AG04450 (cell line): ENCODE measurements at regions of chr6 and their contacts with region 1.

Region 1: DNA sequence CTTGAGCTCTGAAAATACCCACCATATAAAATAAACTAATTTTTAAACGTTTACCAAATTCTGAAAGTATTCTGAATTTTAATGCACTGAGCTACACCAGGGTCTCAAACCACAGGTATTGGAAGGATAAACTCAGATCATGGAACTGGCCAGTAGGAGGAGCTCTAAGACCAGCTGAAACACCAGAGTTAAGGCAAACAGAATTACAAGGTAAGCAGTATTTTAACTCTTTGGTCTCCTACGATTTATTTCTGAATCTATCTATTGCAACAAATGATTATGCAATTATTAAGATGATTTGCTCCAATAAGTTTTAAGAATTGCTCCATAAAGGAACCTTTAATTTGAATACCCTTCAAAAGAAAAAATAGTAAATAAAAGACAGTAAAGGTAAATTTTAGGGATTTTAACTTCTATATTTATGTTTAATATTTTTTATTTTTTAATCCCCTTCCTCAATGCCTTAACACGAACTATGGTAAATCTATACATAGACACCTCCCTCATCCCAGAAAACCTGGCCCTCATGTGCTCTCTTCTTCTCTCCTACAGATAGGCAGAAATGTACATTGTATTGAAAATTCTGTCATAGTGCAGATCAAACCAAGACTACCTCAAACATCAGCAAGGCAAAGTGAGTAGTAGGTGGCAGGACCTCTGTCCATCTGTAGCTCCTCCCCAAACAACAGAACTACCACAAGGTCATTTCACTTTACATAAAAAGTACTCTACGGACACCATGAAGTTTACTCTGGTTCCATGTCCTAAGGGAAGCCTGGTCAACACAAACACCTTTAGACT is 58.4 kb downstream of the SMLR1 start:
- DNase-seq: peak; percentile 62
- H3K4me3 ChIP-seq: no peak overlapping the region
- H3K27ac ChIP-seq: no peak overlapping the region
- H3K27me3 ChIP-seq: no peaks in the 10 kb centered on the region
- CTCF ChIP-seq: peak; percentile 88

Region 2: GRCh38 chr6:130872250-130873095 is 13.1 kb before region 1 on chr6:
- CTCF ChIA-PET with region 1: interaction called, 17 read pairs
- POLR2A ChIA-PET with region 1: no interaction called
- DNase-seq: no peak
- H3K4me3 ChIP-seq: no peak overlapping the region
- H3K27ac ChIP-seq: no peak overlapping the region
- H3K27me3 ChIP-seq: no peaks in the 10 kb centered on the region
- CTCF ChIP-seq: peak; percentile 95

Region 3: GRCh38 chr6:130906736-130907381 is 21.3 kb after region 1 on chr6:
- CTCF ChIA-PET with region 1: interaction called, 5 read pairs
- POLR2A ChIA-PET with region 1: interaction called, 14 read pairs
- DNase-seq: peak; percentile 18
- H3K4me3 ChIP-seq: no peak overlapping the region
- H3K27ac ChIP-seq: peak overlapping the region; percentile 47
- H3K27me3 ChIP-seq: no peaks in the 10 kb centered on the region
- CTCF ChIP-seq: no peak

Region 4: DNA sequence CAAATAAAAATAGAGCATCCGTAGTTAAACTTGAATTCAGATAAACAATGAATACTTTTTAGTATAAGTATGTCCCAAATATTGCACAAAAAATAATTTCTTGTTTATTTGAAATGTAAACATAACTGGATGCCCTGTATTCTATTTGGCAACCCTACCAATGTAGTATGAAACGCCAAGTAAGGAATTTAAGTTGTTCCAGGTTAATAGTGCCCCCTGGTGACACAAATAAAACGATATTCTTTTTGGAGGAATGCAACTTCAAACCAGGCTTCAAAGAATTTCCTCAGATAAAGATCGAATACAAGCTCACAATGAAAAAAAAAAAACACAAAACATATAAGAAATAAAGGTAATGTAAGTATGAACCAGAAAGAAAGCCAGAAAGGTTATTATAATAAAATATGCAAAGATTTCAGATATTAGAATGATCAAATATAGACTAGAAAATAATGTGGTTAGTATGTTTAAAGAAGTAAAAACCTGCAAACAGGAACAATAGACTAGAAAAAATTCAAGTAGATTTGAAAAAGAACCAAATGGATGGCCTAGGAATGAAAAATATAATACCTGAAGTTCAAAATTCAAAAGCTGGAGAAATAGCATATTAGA is 231.3 kb after region 1 on chr6:
- CTCF ChIA-PET with region 1: interaction called, 81 read pairs
- POLR2A ChIA-PET with region 1: interaction called, 10 read pairs
- DNase-seq: peak; percentile 11
- H3K4me3 ChIP-seq: no peak overlapping the region
- H3K27ac ChIP-seq: no peak overlapping the region
- H3K27me3 ChIP-seq: no peaks in the 10 kb centered on the region
- CTCF ChIP-seq: peak; percentile 48

Region 5: DNA sequence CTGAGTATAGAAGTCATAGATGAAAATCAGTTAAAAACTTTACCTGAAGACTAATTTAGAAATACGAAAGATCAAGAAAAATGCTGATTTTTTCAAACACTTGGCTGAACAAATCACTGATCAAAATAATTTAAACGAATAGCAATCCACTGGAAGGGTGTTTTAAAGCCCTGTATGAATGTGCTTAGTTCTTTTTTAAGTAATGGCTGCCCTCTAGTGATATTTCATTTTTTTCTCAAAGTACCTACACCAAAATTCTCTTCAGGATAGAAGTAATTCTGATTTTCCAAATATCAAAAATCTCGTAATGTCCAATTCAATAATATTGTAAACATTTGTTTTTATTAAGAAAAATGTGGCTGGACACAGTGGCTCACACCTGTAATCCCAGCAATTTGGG is 282.2 kb after region 1 on chr6:
- CTCF ChIA-PET with region 1: interaction called, 29 read pairs
- POLR2A ChIA-PET with region 1: no interaction called
- DNase-seq: no peak
- H3K4me3 ChIP-seq: no peak overlapping the region
- H3K27ac ChIP-seq: no peak overlapping the region
- H3K27me3 ChIP-seq: no peaks in the 10 kb centered on the region
- CTCF ChIP-seq: peak; percentile 16; the same call in 1 of the 2 replicates

Region 6: DNA sequence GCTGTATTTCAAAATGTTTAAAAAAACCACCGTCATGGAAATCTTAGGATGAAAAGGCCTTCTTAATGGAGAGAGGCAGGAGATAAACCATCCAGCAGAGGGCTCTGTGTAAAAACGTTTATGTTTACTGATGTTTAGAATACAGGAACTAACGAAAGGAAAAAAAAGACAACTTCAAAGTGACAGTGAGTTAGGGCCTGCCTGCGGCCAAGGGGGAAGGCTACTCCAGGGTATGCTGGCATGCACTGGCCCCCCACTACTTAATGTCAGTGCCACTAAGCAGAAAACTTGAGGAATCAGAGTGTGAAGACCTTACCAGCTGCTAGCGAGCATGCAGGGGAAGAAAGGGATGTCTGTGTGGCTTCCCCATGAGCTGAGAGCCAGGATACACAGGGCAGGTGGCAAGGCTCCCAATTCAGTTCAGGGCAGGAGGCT is 297.4 kb after region 1 on chr6:
- CTCF ChIA-PET with region 1: interaction called, 10 read pairs
- POLR2A ChIA-PET with region 1: no interaction called
- DNase-seq: no peak
- H3K4me3 ChIP-seq: no peak overlapping the region
- H3K27ac ChIP-seq: no peak overlapping the region
- H3K27me3 ChIP-seq: no peaks in the 10 kb centered on the region
- CTCF ChIP-seq: peak; percentile 71

Region 7: DNA sequence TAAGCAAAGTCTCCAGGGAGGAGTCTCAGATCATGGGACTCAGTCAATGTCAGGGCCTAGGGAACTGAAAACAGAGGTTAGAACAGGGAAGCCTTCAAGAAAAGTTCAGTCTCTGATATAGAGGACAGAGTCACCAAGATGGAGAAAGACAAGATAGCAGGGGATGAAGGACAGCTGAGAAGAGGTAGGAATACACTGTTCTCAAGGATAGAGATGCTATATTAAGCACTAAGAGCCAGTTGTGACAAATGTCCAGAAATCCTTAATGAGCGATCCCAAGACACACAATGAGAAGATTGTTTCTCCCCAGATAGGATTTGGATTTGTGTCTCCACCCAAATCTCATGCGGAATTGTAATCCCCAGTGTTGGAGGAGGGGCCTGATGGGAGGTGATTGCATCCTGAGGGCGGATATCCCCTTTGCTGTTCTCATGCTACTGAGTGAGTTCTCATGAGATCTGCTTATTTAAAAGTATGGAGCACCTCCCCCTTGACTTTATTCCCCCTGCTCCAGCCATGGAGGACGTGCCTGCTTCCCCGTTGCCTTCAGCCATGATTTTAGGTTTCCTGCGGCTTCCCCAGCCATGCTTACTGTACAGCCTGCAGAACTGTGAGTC is 417.9 kb after region 1 on chr6:
- CTCF ChIA-PET with region 1: no interaction called
- POLR2A ChIA-PET with region 1: no interaction called
- DNase-seq: no peak
- H3K4me3 ChIP-seq: no peak overlapping the region
- H3K27ac ChIP-seq: no peak overlapping the region
- H3K27me3 ChIP-seq: no peaks in the 10 kb centered on the region
- CTCF ChIP-seq: no peak

Region 8: DNA sequence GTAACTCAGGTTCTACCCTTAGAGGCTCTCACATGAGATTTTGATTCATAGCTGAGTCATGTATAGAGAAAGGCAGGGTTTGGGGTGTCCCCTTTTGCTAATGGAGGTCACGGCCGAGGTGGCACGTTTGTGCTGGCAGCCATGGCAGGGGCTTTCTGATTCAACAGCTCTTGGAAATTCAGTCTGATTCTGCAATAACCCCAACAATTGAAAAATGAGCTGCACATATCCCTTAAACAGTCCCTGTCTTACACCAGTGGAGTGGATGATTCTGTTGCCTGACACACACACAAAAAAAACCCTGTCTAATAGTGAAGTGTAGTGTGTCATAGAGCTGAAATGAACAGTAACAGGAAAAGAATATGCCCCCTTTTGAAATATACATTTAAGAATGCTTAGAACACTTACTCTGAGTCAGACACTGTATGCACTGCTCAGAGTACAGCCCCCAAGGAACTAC is 647.0 kb after region 1 on chr6:
- CTCF ChIA-PET with region 1: interaction called, 23 read pairs
- POLR2A ChIA-PET with region 1: no interaction called
- DNase-seq: no peak
- H3K4me3 ChIP-seq: no peak overlapping the region
- H3K27ac ChIP-seq: no peak overlapping the region
- H3K27me3 ChIP-seq: peaks cover 5% of the 10 kb centered on the region
- CTCF ChIP-seq: no peak